ENCODE measurements at regions of chr1 and their contacts with region 1.

Region 1: GRCh38 chr1:23867953-23868556 is at the start of gene FUCA1:
- DNase-seq: peak; percentile 86 to 96 (median 95)
- ATAC-seq: peak; percentile 99
- H3K4me3 ChIP-seq: peak within 1 kb of the TSS; percentile 81
- H3K4me3 Mint-ChIP-seq: peak within 1 kb of the TSS; percentile 79 to 94 (median 89)
- H3K27ac ChIP-seq: peak within 1 kb of the TSS; percentile 77
- H3K27ac Mint-ChIP-seq: peak within 1 kb of the TSS; percentile 76 to 95 (median 90)
- H3K4me1 ChIP-seq: peaks cover 5 to 15% of the 10 kb centered on the region in 2 donors
- H3K4me1 Mint-ChIP-seq: peaks cover 18 to 38% (median 24%) of the 10 kb centered on the region in 7 donors
- H3K27me3 ChIP-seq: no peaks in the 10 kb centered on the region
- H3K27me3 Mint-ChIP-seq: peaks cover 0 to 15% (median 0%) of the 10 kb centered on the region in 5 donors
- total RNA-seq, gene FUCA1: 4.9 to 62.7 (median 16.3) TPM

Region 2: GRCh38 chr1:23777979-23778814 is 89.9 kb before region 1 on chr1 and contains the start of gene PITHD1:
- CTCF ChIA-PET with region 1: no interaction called
- POLR2A ChIA-PET with region 1: no interaction called
- intact Hi-C with region 1: loop called in 1 of 2 experiments (anchors 1 kb)
- DNase-seq: peak; percentile 75 to 86 (median 83)
- ATAC-seq: peak; percentile 91
- H3K4me3 ChIP-seq: peak within 1 kb of the TSS; percentile 95
- H3K4me3 Mint-ChIP-seq: peak within 1 kb of the TSS; percentile 84 to 98 (median 94)
- H3K27ac ChIP-seq: peak within 1 kb of the TSS; percentile 97
- H3K27ac Mint-ChIP-seq: peak within 1 kb of the TSS; percentile 87 to 99 (median 96)
- H3K4me1 ChIP-seq: peaks cover 17 to 22% of the 10 kb centered on the region in 2 donors
- H3K4me1 Mint-ChIP-seq: peaks cover 17 to 65% (median 49%) of the 10 kb centered on the region in 7 donors
- H3K27me3 ChIP-seq: no peaks in the 10 kb centered on the region
- H3K27me3 Mint-ChIP-seq: no peaks in the 10 kb centered on the region
- total RNA-seq, gene PITHD1: 57.6 to 81.9 (median 76.0) TPM

Region 3: GRCh38 chr1:23809751-23810171 is 58.3 kb before region 1 on chr1:
- CTCF ChIA-PET with region 1: interaction called, 22 read pairs
- POLR2A ChIA-PET with region 1: interaction called, 3 read pairs
- intact Hi-C with region 1: loop called (anchors 1 kb)
- DNase-seq: peak; percentile 71 to 84 (median 80)
- ATAC-seq: peak; percentile 94
- H3K4me3 ChIP-seq: no peak overlapping the region
- H3K4me3 Mint-ChIP-seq: no peak overlapping the region
- H3K27ac ChIP-seq: no peak overlapping the region
- H3K27ac Mint-ChIP-seq: peak overlapping the region in 4 of 9 donors; percentile 46 to 79 (median 64)
- H3K4me1 ChIP-seq: peaks cover 0 to 10% of the 10 kb centered on the region in 2 donors
- H3K4me1 Mint-ChIP-seq: peaks cover 15 to 30% (median 17%) of the 10 kb centered on the region in 7 donors
- H3K27me3 ChIP-seq: no peaks in the 10 kb centered on the region
- H3K27me3 Mint-ChIP-seq: no peaks in the 10 kb centered on the region

Region 4: DNA sequence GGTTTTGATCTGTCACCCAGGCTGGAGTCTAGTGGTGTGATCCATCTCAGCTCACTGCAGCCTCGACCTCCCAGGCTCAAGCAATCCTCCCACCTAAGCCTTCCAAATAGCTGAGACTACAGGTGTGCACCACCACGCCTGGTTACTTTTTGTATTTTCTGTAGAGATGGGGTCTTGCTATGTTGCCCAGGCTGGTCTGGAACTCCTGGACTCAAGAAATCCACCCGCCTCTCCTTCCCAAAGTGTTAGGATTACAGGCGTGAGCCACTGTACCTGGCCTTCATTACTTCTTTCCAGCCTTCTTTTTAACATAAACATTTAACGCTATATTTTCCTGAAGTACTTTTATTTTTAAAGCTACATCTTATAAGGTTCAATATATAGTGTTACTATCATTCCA is 24.4 kb before region 1 on chr1:
- CTCF ChIA-PET with region 1: no interaction called
- POLR2A ChIA-PET with region 1: no interaction called
- intact Hi-C with region 1: loop called (anchors 1 to 2 kb)
- DNase-seq: no peak
- ATAC-seq: no peak
- H3K4me3 ChIP-seq: no peak overlapping the region
- H3K4me3 Mint-ChIP-seq: no peak overlapping the region
- H3K27ac ChIP-seq: no peak overlapping the region
- H3K27ac Mint-ChIP-seq: no peak overlapping the region
- H3K4me1 ChIP-seq: no peaks in the 10 kb centered on the region
- H3K4me1 Mint-ChIP-seq: peaks cover 0 to under 1% (median under 1%) of the 10 kb centered on the region in 7 donors
- H3K27me3 ChIP-seq: no peaks in the 10 kb centered on the region
- H3K27me3 Mint-ChIP-seq: peaks cover 0 to 20% (median 0%) of the 10 kb centered on the region in 5 donors

Region 5: DNA sequence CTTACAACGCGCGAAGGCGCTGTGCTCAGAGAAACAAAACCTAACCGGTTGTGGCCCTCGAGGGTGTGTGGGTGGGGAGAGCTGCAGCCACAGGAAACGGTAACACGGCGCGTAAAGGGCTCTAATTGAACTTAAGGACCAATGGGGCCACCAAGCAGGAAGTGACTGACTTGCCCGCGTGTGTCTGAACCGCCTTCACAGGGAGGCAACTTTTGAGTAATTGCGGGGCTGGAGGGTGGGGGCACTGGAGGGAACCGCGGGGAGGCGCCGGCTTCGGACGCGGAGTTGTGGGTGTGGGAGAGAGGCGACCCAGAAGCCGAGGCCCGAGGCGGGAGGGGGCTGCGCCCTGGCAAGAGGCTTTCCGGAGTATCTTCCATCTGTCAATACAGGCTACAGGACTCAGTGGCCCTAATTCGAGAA is 91.0 kb after region 1 on chr1:
- CTCF ChIA-PET with region 1: no interaction called
- POLR2A ChIA-PET with region 1: no interaction called
- intact Hi-C with region 1: loop called in 1 of 2 experiments (anchors 1 kb)
- DNase-seq: peak; percentile 60 to 96 (median 92)
- ATAC-seq: peak; percentile 89
- H3K4me3 ChIP-seq: peak overlapping the region; percentile 72
- H3K4me3 Mint-ChIP-seq: peak overlapping the region; percentile 93 to 100 (median 99)
- H3K27ac ChIP-seq: peak overlapping the region; percentile 95
- H3K27ac Mint-ChIP-seq: peak overlapping the region; percentile 98 to 100 (median 100)
- H3K4me1 ChIP-seq: peaks cover 23 to 25% of the 10 kb centered on the region in 2 donors
- H3K4me1 Mint-ChIP-seq: peaks cover 31 to 83% (median 57%) of the 10 kb centered on the region in 7 donors
- H3K27me3 ChIP-seq: no peaks in the 10 kb centered on the region
- H3K27me3 Mint-ChIP-seq: no peaks in the 10 kb centered on the region

Region 6: DNA sequence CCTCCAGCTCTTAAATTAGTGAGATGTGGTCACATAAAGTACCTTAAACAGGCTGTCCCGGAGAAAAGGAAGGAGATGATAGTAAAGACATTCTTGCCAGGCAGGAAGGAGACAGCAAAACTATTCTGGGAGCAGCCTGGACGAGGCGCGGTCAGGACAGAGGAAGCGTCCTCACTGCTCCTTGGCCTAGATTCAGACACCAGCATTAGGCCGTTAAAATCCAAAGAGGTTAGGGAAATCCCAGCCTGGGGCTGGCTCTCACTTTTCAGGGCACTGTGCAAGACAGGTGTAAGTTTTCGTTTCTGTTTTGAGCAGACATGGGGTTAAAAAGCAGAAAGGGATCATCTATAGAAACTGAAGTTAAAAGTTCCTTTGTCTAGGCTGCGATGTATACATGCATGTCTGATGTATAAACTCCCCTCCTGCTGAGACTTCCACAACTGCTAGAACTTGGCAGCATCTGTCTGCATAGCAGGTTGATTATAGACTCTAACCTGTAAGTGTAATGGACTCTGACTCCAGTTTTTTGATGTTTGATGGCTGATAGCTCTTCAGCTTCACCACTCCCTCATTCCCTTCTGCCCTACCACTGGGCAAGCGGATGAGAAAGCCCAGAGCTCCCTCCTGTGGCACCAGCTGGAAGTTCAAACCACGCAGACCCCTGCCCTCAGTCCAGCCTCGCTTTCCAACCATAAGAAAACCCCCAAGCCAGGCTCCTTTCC is 524.0 kb after region 1 on chr1:
- CTCF ChIA-PET with region 1: no interaction called
- POLR2A ChIA-PET with region 1: no interaction called
- intact Hi-C with region 1: loop called in 1 of 2 experiments (anchors 5 kb)
- DNase-seq: peak in 8 of 9 donors; percentile 29 to 60 (median 47)
- ATAC-seq: peak; percentile 81
- H3K4me3 ChIP-seq: peak overlapping the region; percentile 35
- H3K4me3 Mint-ChIP-seq: peak overlapping the region in 9 of 10 donors; percentile 18 to 77 (median 66)
- H3K27ac ChIP-seq: peak overlapping the region; percentile 60
- H3K27ac Mint-ChIP-seq: peak overlapping the region; percentile 76 to 97 (median 94)
- H3K4me1 ChIP-seq: peaks cover 12 to 29% of the 10 kb centered on the region in 2 donors
- H3K4me1 Mint-ChIP-seq: peaks cover 26 to 45% (median 40%) of the 10 kb centered on the region in 7 donors
- H3K27me3 ChIP-seq: no peaks in the 10 kb centered on the region
- H3K27me3 Mint-ChIP-seq: no peaks in the 10 kb centered on the region